A549 (cell line): ENCODE measurements at regions of chr5 and their contacts with region 1.

Region 1: GRCh38 chr5:91383027-91383955 is at the start of gene ARRDC3:
- DNase-seq: peak; percentile 95 to 97
- ATAC-seq: peak; percentile 80 to 85
- H3K4me3 ChIP-seq: peak within 1 kb of the TSS; percentile 60
- H3K27ac ChIP-seq: peak within 1 kb of the TSS; percentile 91 to 96
- H3K4me1 ChIP-seq: peaks cover 6% of the 10 kb centered on the region; the same call in 2 of the 3 replicates
- CTCF ChIP-seq: no peak
- EP300 ChIP-seq: no peak; a peak in 1 of 5 replicates
- POLR2A ChIP-seq: peak; percentile 97
- RAD21 ChIP-seq: peak; percentile 3 to 27; a peak in 3 of 5 replicates
- polyA plus RNA-seq, gene ARRDC3: 32.4 and 36.3 TPM in 2 replicates

Region 2: DNA sequence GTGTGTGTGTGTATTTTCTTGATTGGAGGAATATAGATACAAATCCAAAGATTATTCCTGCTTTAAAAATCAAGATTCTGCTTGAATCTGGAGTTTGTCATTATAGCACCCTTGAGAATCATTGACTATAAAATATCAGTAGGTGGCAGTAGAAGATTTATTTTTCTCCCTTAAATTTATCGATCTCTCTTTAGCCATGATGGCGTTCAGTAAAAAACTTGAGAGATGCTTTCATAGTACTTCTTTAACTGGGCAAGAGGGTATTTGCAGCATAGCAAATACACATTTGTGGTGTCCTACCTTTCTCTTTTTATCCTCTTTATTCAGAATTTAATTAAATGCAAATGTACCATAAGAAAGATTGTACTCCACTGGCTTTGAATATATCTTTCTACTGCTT is 517.0 kb before region 1 on chr5:
- CTCF ChIA-PET with region 1: interaction called, 166 read pairs
- POLR2A ChIA-PET with region 1: interaction called, 13 read pairs
- DNase-seq: peak; percentile 32 to 50
- ATAC-seq: peak; percentile 69 to 85; a peak in 3 of 6 replicates
- H3K4me3 ChIP-seq: no peak overlapping the region
- H3K27ac ChIP-seq: peak overlapping the region; percentile 32 to 53; a peak in 2 of 6 replicates
- H3K4me1 ChIP-seq: peaks cover 19% of the 10 kb centered on the region
- CTCF ChIP-seq: peak; percentile 77
- EP300 ChIP-seq: no peak
- POLR2A ChIP-seq: no peak
- RAD21 ChIP-seq: peak; percentile 83 to 92

Region 3: GRCh38 chr5:90983148-90983547 is 400.1 kb before region 1 on chr5:
- CTCF ChIA-PET with region 1: interaction called, 7 read pairs
- POLR2A ChIA-PET with region 1: interaction called, 23 read pairs
- DNase-seq: peak; percentile 51 to 95
- ATAC-seq: peak; percentile 92 to 97
- H3K4me3 ChIP-seq: no peak overlapping the region
- H3K27ac ChIP-seq: peak overlapping the region; percentile 85 to 91
- H3K4me1 ChIP-seq: peaks cover 38% of the 10 kb centered on the region
- CTCF ChIP-seq: no peak
- EP300 ChIP-seq: peak; percentile 97
- POLR2A ChIP-seq: no peak
- RAD21 ChIP-seq: peak; percentile 50 to 67

Region 4: DNA sequence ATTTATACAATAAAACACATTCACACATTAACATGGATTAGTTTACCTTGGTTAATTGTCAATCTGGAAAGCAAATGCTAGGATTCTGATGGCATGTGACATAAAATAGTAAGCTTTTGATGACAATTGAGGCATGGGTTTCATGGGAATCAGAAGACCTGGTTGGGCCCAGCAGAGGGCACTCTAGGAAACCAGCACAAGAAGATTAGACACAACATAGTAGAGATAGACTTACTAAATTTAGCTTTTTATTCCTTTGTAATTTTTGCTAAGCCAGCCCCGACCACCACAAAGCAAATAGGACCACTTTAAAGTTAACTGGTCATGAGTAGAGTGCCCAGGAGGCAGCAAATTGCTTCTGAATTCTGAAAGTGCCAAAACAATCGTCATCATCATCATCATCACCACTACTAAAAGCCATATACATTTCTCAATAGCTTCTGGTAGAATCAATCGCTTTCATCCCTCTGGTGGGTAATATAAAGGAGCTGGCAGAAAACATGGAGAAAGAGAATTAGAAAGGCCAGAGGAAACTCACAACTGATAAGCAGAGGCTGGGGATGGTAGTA is 163.4 kb before region 1 on chr5:
- CTCF ChIA-PET with region 1: interaction called, 23 read pairs
- POLR2A ChIA-PET with region 1: interaction called, 20 read pairs
- DNase-seq: peak; percentile 24 to 73
- ATAC-seq: peak; percentile 58 to 70; a peak in 3 of 6 replicates
- H3K4me3 ChIP-seq: no peak overlapping the region
- H3K27ac ChIP-seq: peak overlapping the region; percentile 66 to 72
- H3K4me1 ChIP-seq: peaks cover 26% of the 10 kb centered on the region
- CTCF ChIP-seq: peak; percentile 45
- EP300 ChIP-seq: no peak
- POLR2A ChIP-seq: no peak
- RAD21 ChIP-seq: peak; percentile 34 to 47; a peak in 4 of 5 replicates

Region 5: GRCh38 chr5:91293131-91293530 is 90.2 kb before region 1 on chr5:
- CTCF ChIA-PET with region 1: interaction called, 21 read pairs
- POLR2A ChIA-PET with region 1: interaction called, 4 read pairs
- DNase-seq: no peak
- ATAC-seq: peak in 1 of 2 experiments; percentile 16; a peak in 1 of 6 replicates
- H3K4me3 ChIP-seq: no peak overlapping the region
- H3K27ac ChIP-seq: peak overlapping the region in 1 of 2 experiments; percentile 57; a peak in 3 of 6 replicates
- H3K4me1 ChIP-seq: peaks cover 26% of the 10 kb centered on the region
- CTCF ChIP-seq: no peak
- EP300 ChIP-seq: no peak
- POLR2A ChIP-seq: no peak
- RAD21 ChIP-seq: no peak

Region 6: DNA sequence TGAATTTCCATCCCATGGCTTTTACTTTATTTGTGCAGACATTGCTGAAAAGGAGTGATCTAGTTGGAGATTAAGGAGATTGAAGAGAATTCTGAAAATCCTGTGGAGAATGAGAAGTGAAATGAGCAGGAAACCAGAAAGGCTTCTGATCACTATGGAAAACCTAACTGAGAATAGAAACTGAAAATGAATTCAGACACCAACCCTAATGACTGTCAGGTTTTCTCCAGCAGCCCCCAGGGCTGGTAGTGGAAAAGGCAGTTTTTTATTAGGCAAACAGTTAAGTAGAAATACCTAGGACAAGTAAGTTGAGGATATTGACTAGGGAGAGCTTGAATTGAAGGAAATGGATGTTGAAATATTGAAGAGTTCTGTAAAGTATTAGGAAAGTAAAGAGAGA is 14.5 kb after region 1 on chr5:
- CTCF ChIA-PET with region 1: interaction called, 13 read pairs
- POLR2A ChIA-PET with region 1: interaction called, 3 read pairs
- DNase-seq: no peak
- ATAC-seq: no peak
- H3K4me3 ChIP-seq: no peak overlapping the region
- H3K27ac ChIP-seq: no peak overlapping the region
- H3K4me1 ChIP-seq: no peaks in the 10 kb centered on the region
- CTCF ChIP-seq: no peak
- EP300 ChIP-seq: no peak
- POLR2A ChIP-seq: no peak
- RAD21 ChIP-seq: no peak